ENCODE measurements at regions of chr1 and their contacts with region 1.

Region 1: GRCh38 chr1:157156058-157156541 is 17.9 kb upstream of the ETV3 start:
- DNase-seq: peak; percentile 81
- H3K4me3 ChIP-seq: peak overlapping the region; percentile 48; the same call in 1 of the 2 replicates
- H3K27ac ChIP-seq: no peak overlapping the region
- H3K4me1 ChIP-seq: peaks cover 17% of the 10 kb centered on the region
- H3K27me3 ChIP-seq: no peaks in the 10 kb centered on the region

Region 2: DNA sequence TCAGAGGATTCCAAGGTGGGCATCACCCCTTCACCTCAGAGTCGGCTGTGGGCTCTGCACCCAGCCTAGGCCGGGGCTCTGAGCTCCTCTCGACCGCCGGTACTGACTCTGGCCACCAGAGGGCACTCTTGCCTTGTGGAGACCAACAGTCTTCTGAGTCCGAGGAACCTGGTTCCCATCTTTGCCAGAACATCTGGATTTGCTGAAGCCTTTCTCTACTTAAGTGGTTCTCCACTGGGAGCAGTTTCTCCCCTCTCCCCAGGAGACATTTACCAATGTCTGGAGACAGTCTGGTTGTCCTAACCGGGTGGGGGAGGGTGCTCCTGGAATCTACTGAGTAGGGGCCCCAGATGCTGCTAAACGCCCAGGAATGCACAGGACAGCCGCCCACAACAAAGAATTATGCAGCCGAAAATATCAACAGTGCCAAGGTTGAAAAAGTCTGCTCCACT is 65.9 kb before region 1 on chr1:
- in situ Hi-C with region 1: loop called (anchors 10 kb)
- DNase-seq: peak; percentile 92
- H3K4me3 ChIP-seq: peak overlapping the region; percentile 50
- H3K27ac ChIP-seq: 0 out of 2 replicates have a peak overlapping the region, but pooled peaks have one; percentile 14
- H3K4me1 ChIP-seq: peaks cover 8% of the 10 kb centered on the region
- H3K27me3 ChIP-seq: no peaks in the 10 kb centered on the region

Region 3: GRCh38 chr1:157117527-157118057 is 38.5 kb before region 1 on chr1:
- in situ Hi-C with region 1: no loop called
- DNase-seq: no peak
- H3K4me3 ChIP-seq: no peak overlapping the region
- H3K27ac ChIP-seq: no peak overlapping the region
- H3K4me1 ChIP-seq: no peaks in the 10 kb centered on the region
- H3K27me3 ChIP-seq: no peaks in the 10 kb centered on the region

Region 4: DNA sequence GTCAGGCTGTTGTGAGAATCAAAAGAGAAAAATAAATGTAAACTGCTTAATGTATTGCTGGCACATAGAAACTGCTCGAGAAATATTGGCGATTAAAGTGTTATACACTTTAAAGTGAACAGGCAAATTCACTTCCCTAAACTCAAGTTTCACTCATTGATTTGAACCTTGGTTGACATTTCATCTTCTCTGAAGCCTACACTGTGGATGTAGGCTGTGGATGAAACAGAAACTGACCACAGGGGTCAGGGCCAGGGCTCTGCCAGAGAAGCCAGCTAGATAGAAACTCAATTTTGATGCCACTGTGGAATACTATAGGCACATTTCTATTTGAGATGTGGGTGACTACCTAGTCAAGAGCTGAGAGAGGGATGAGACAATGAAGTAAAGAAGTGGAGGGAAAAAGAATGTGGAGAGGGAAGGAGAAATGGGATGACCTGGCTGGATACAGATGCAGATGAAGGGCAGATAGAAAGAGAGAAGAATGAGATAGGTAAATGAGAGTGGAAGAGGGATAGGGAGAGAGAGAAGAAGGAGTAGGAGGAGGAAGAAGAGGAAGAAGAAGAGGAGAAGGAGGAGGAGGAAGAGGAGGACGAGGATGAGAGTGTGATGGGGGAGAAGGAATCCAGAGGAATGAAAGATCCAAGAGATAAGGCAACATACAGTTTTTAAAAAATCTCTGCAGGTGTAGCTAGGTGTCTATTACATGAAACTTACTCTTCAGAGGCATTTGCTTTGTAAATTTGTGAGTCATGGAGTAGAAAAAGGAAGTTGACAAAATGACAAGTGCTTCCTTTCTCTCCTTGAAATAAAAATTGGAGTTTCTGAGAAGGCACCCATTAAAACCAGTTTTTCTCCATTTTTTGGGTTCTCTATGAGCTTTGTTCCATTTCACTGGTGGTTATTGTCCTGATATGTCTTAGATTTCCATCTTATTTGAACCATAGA is 1007.2 kb after region 1 on chr1:
- in situ Hi-C with region 1: no loop called
- DNase-seq: no peak
- H3K4me3 ChIP-seq: no peak overlapping the region
- H3K27ac ChIP-seq: no peak overlapping the region
- H3K4me1 ChIP-seq: no peaks in the 10 kb centered on the region
- H3K27me3 ChIP-seq: peaks cover 12% of the 10 kb centered on the region

Measured in GM23248 (cell line).